Thyroid gland (tissue), 4 donors: ENCODE measurements at regions of chr6 and their contacts with region 1.

Region 1: GRCh38 chr6:79713701-79714322 is 82.7 kb downstream of the SH3BGRL2 start:
- DNase-seq: peak; percentile 52 to 56
- H3K4me3 ChIP-seq: no peak overlapping the region
- H3K27ac ChIP-seq: no peak overlapping the region
- H3K4me1 ChIP-seq: peaks cover 0 to 3% of the 10 kb centered on the region in 2 donors
- H3K27me3 ChIP-seq: no peaks in the 10 kb centered on the region
- CTCF ChIP-seq: peak; percentile 22 to 74 (median 58)
- POLR2A ChIP-seq: no peak

Region 2: GRCh38 chr6:79564636-79565035 is 149.2 kb before region 1 on chr6:
- intact Hi-C with region 1: loop called (anchors 5 kb)
- DNase-seq: no peak
- H3K4me3 ChIP-seq: no peak overlapping the region
- H3K27ac ChIP-seq: no peak overlapping the region
- H3K4me1 ChIP-seq: peaks cover 5 to 6% of the 10 kb centered on the region in 2 donors
- H3K27me3 ChIP-seq: no peaks in the 10 kb centered on the region
- CTCF ChIP-seq: no peak
- POLR2A ChIP-seq: no peak